CD4-positive, alpha-beta memory T cell (primary cell): ENCODE measurements at regions of chr5 and their contacts with region 1.

Region 1: GRCh38 chr5:170183816-170184687 is 48.7 kb upstream of the C5orf58 start:
- DNase-seq: peak in 4 of 5 donors; percentile 7 to 14 (median 10)
- H3K4me3 ChIP-seq: no peak overlapping the region
- H3K4me3 Mint-ChIP-seq: no peak overlapping the region
- H3K27ac ChIP-seq: no peak overlapping the region
- H3K27ac Mint-ChIP-seq: no peak overlapping the region
- H3K4me1 ChIP-seq: no peaks in the 10 kb centered on the region
- H3K4me1 Mint-ChIP-seq: no peaks in the 10 kb centered on the region
- H3K27me3 ChIP-seq: no peaks in the 10 kb centered on the region
- H3K27me3 Mint-ChIP-seq: peaks cover 11 to 13% of the 10 kb centered on the region in 2 donors

Region 2: GRCh38 chr5:170173235-170173634 is 10.8 kb before region 1 on chr5:
- CTCF ChIA-PET with region 1: interaction called, 26 read pairs
- POLR2A ChIA-PET with region 1: no interaction called
- intact Hi-C with region 1: no loop called
- DNase-seq: no peak
- H3K4me3 ChIP-seq: no peak overlapping the region
- H3K4me3 Mint-ChIP-seq: no peak overlapping the region
- H3K27ac ChIP-seq: no peak overlapping the region
- H3K27ac Mint-ChIP-seq: peak overlapping the region in 1 of 7 donors; percentile 6
- H3K4me1 ChIP-seq: no peaks in the 10 kb centered on the region
- H3K4me1 Mint-ChIP-seq: no peaks in the 10 kb centered on the region
- H3K27me3 ChIP-seq: no peaks in the 10 kb centered on the region
- H3K27me3 Mint-ChIP-seq: peaks cover 0 to 5% of the 10 kb centered on the region in 2 donors

Region 3: GRCh38 chr5:170397059-170397458 is 213.0 kb after region 1 on chr5:
- CTCF ChIA-PET with region 1: no interaction called
- POLR2A ChIA-PET with region 1: no interaction called
- intact Hi-C with region 1: no loop called
- DNase-seq: no peak
- H3K4me3 ChIP-seq: no peak overlapping the region
- H3K4me3 Mint-ChIP-seq: no peak overlapping the region
- H3K27ac ChIP-seq: no peak overlapping the region
- H3K27ac Mint-ChIP-seq: no peak overlapping the region
- H3K4me1 ChIP-seq: peaks cover 13% of the 10 kb centered on the region
- H3K4me1 Mint-ChIP-seq: peaks cover 12 to 15% (median 13%) of the 10 kb centered on the region in 4 donors
- H3K27me3 ChIP-seq: no peaks in the 10 kb centered on the region
- H3K27me3 Mint-ChIP-seq: peaks cover 0 to 6% of the 10 kb centered on the region in 2 donors